ENCODE measurements at regions of chr22 and their contacts with region 1.

Region 1: GRCh38 chr22:28772633-28773460 is at the start of gene CCDC117:
- DNase-seq: peak; percentile 94 to 96
- H3K4me3 ChIP-seq: peak within 1 kb of the TSS; percentile 48
- H3K4me3 Mint-ChIP-seq: peak within 1 kb of the TSS; percentile 78
- H3K27ac Mint-ChIP-seq: peak within 1 kb of the TSS; percentile 88
- H3K4me1 ChIP-seq: no peaks in the 10 kb centered on the region
- H3K4me1 Mint-ChIP-seq: peaks cover 7% of the 10 kb centered on the region
- H3K27me3 ChIP-seq: no peaks in the 10 kb centered on the region
- H3K27me3 Mint-ChIP-seq: no peaks in the 10 kb centered on the region
- CTCF ChIP-seq: peak in 1 of 2 experiments; percentile 2
- total RNA-seq, gene CCDC117: 27.8 and 33.1 TPM in 2 replicates

Region 2: GRCh38 chr22:28741758-28742561 is 30.9 kb before region 1 on chr22 and contains the starts of genes CHEK2 and HSCB:
- CTCF ChIA-PET with region 1: interaction called, 4 read pairs
- POLR2A ChIA-PET with region 1: interaction called, 7 read pairs
- intact Hi-C with region 1: loop called (anchors 1 kb)
- DNase-seq: peak; percentile 98 to 99
- H3K4me3 ChIP-seq: peak within 1 kb of the TSS; percentile 72
- H3K4me3 Mint-ChIP-seq: peak within 1 kb of the TSS; percentile 90
- H3K27ac Mint-ChIP-seq: peak within 1 kb of the TSS; percentile 77
- H3K4me1 ChIP-seq: 0 out of 2 replicates have a peak, but pooled peaks cover 5% of the 10 kb centered on the region
- H3K4me1 Mint-ChIP-seq: peaks cover 14% of the 10 kb centered on the region
- H3K27me3 ChIP-seq: no peaks in the 10 kb centered on the region
- H3K27me3 Mint-ChIP-seq: no peaks in the 10 kb centered on the region
- CTCF ChIP-seq: peak in 1 of 2 experiments; percentile 20
- total RNA-seq, gene CHEK2: 34.0 and 38.0 TPM in 2 replicates
- total RNA-seq, gene HSCB: 8.2 and 11.4 TPM in 2 replicates

Region 3: GRCh38 chr22:28783786-28784671 is 11.2 kb after region 1 on chr22:
- CTCF ChIA-PET with region 1: interaction called, 10 read pairs
- POLR2A ChIA-PET with region 1: interaction called, 19 read pairs
- intact Hi-C with region 1: loop called (anchors 1 kb)
- DNase-seq: peak; percentile 67 to 79
- H3K4me3 ChIP-seq: no peak overlapping the region
- H3K4me3 Mint-ChIP-seq: peak overlapping the region; percentile 45
- H3K27ac Mint-ChIP-seq: peak overlapping the region; percentile 76
- H3K4me1 ChIP-seq: peaks cover 28% of the 10 kb centered on the region
- H3K4me1 Mint-ChIP-seq: peaks cover 26% of the 10 kb centered on the region
- H3K27me3 ChIP-seq: no peaks in the 10 kb centered on the region
- H3K27me3 Mint-ChIP-seq: no peaks in the 10 kb centered on the region
- CTCF ChIP-seq: no peak